ENCODE measurements at regions of chr2 and their contacts with region 1.

Region 1: GRCh38 chr2:68594674-68595492 is 48.5 kb upstream of the PROKR1 start:
- DNase-seq: peak; percentile 2
- H3K4me3 ChIP-seq: no peak overlapping the region
- H3K27me3 ChIP-seq: no peaks in the 10 kb centered on the region
- CTCF ChIP-seq: peak; percentile 94

Region 2: DNA sequence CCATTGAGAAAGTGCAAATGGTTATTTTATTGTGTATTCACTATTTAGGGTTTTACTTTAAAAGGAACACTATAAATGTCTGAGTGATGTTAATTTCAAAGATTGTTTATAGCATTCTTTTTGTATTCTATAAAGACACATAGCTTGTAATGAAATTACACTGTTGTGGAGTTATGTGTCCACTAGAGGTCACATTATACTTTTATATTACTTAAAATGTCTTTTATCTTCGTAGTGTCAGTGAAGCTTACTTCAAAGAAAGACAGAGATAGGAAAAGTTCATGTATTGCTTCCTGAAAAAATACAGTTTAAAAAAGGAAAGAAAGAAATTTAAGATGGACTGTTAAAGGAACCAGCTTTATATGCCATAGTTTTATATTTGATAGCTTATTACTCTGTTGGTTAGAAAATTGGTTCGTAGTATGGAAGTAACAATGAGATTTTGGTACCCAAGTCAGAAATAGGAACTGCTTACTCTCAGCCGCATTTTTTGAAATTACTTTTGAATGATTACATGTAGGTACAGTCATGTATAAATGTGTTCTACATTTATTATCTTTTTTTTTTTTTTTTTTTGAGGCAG is 107.0 kb before region 1 on chr2:
- CTCF ChIA-PET with region 1: interaction called, 30 read pairs
- POLR2A ChIA-PET with region 1: no interaction called
- DNase-seq: no peak
- H3K4me3 ChIP-seq: no peak overlapping the region
- H3K27me3 ChIP-seq: no peaks in the 10 kb centered on the region
- CTCF ChIP-seq: peak; percentile 45

Region 3: GRCh38 chr2:68553098-68553497 is 41.8 kb before region 1 on chr2:
- CTCF ChIA-PET with region 1: no interaction called
- POLR2A ChIA-PET with region 1: no interaction called
- DNase-seq: no peak
- H3K4me3 ChIP-seq: no peak overlapping the region
- H3K27me3 ChIP-seq: no peaks in the 10 kb centered on the region
- CTCF ChIP-seq: no peak

Region 4: DNA sequence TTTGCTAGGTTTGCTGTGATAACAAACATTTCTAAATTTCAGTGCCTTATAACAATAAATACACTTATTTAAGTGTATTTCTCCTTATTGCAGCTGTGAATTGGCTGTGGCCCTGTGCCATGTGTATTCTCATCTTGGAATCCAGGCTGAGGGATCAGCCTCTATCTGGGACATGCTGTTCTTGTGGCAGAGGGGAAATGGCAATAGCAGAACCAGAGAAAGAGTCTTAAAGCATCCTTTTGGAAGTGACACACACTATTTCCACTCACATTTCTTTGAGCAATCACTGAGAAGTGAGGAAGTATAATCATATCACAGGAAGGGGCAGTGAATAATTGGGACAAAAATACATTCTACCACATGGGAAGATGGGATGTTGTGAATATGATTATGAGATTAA is 17.7 kb before region 1 on chr2:
- CTCF ChIA-PET with region 1: interaction called, 15 read pairs
- POLR2A ChIA-PET with region 1: no interaction called
- DNase-seq: no peak
- H3K4me3 ChIP-seq: no peak overlapping the region
- H3K27me3 ChIP-seq: no peaks in the 10 kb centered on the region
- CTCF ChIP-seq: no peak

Region 5: DNA sequence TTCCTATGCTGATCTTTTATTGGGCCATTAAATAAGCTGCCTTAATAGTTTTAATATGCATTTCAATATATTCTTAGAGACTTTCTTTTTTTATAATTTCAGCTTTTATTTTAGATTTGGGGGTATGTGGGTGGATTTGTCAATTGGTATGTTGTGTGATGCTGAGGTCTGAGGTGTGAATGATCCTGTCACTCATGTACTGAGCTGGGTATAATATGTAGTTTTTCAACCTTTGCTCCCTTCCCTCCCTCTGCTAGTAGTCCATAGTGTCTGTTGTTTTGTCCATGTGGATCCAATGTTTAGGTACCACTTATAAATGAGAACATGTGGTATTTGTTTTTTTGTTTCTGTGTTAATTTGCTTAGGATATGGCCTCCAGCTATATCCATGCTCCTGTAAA is 13.0 kb after region 1 on chr2:
- CTCF ChIA-PET with region 1: interaction called, 12 read pairs
- POLR2A ChIA-PET with region 1: no interaction called
- DNase-seq: no peak
- H3K4me3 ChIP-seq: no peak overlapping the region
- H3K27me3 ChIP-seq: no peaks in the 10 kb centered on the region; the same call in 1 of the 2 replicates
- CTCF ChIP-seq: no peak